ENCODE measurements at regions of chr20 and their contacts with region 1.

Region 1: DNA sequence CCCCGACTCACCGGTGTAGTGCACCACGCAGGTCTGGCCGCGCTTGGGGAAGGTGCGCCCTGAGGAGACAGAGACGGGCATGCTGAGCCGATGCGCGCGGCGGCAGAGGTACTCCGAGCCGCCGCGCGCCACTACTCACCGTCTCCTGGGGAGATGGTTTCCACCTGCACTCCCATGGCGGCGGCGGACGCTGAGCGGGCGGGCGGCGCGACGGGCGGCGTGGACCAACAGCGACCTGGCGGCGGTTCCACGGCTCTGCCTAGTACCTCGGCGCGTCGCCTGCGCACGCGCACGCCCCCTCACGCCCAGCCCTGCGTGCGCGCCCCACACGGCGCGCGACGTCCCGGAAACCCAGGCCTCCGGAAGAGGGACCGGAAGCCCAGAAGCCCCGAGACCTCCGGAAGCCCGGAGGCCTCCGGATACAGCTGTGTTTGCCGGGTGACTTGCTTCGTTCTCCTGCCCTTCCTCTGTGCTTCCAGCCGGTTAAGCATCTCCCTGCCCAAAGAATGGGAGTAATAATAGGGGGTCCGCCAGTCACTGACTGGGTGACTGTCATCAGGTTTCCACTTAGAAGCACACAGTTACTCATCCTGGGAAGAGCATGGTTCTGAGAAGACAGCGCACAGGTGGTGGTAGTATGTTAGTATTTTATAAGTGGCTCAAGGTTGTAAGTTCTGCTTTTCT is at the start of gene FKBP1A:
- DNase-seq: peak; percentile 85 to 94
- H3K4me3 ChIP-seq: peak within 1 kb of the TSS; percentile 70 to 84
- H3K27ac ChIP-seq: peak within 1 kb of the TSS; percentile 71 to 72
- H3K4me1 ChIP-seq: peaks cover 0 to 47% (median 38%) of the 10 kb centered on the region in 4 donors
- H3K27me3 ChIP-seq: peaks cover 0 to 5% of the 10 kb centered on the region in 2 donors
- CTCF ChIP-seq: peak; percentile 17 to 26

Region 2: DNA sequence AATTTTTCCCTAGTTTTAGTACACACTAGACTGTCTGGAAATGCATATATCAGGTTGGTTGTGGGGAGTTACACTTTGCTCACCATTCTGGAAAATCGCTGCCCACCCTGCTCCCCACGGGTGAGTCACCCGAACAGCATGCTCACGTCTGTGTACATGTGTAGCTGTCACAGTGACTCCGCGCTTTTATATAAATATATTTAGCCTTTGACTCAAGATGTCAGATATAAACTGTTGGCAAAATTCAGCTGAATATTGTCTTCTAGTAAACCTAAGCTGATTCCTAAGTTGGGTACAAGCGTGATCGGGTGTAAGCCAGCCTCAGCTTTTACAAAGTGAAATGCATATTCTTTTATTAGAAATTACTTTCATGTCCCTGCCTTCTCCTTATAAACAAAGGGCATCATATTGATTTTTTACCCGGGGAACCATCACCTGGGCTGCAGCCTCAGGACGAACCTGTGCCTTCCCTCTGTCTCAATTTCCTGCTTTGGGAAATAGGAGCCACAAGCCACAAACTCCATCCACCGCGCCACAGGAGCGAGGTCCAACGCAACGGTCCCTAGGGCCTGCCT is 68.3 kb before region 1 on chr20:
- intact Hi-C with region 1: loop called (anchors 5 kb)
- DNase-seq: peak in 1 of 2 donors; percentile 62
- H3K4me3 ChIP-seq: peak overlapping the region; percentile 72 to 92
- H3K27ac ChIP-seq: peak overlapping the region; percentile 95 to 98
- H3K4me1 ChIP-seq: peaks cover 0 to 33% (median 22%) of the 10 kb centered on the region in 4 donors
- H3K27me3 ChIP-seq: no peaks in the 10 kb centered on the region
- CTCF ChIP-seq: no peak

Measured in tibial artery (tissue), 4 donors.